Esophagus muscularis mucosa (tissue), 4 donors: ENCODE measurements at regions of chr16 and their contacts with region 1.

Region 1: DNA sequence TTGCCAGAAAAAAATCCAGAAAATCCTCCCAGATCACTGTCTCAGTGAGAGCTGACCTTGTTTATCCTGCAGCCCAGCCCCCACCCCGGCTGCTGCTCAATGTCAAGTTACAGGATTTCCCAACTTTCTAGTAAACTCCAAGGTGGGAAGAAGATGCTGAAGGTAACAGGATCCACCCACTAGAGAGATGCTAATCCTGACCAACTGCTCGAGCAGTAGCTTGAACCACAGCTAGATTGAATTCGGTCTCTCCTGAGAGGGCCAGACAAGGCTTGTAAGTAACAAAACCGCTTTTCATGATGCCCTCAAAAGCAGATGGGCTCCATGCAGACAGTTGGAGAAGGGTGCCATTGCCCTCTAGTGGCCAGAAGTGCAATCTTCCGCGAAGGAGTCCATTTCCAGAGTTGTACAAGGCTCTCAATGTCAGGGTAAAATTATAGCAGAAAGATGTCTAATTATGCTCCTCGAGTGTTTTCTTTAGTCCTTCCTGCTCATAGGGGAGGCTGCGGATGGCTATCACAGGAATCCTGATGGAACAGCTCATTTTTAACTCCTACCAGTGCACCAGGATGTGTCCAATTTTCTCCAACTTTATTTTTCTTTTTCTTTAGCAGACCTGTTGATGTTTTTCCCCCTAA is 3.9 kb downstream of the CDH11 start:
- DNase-seq: peak; percentile 91
- H3K4me3 ChIP-seq: peak overlapping the region in 1 of 4 donors; percentile 3
- H3K27ac ChIP-seq: peak overlapping the region in 2 of 4 donors; percentile 16 to 45
- H3K4me1 ChIP-seq: peaks cover 24 to 71% (median 69%) of the 10 kb centered on the region in 4 donors
- H3K27me3 ChIP-seq: peaks cover 0 to 7% (median 0%) of the 10 kb centered on the region in 4 donors
- CTCF ChIP-seq: peak; percentile 77 to 91 (median 87)
- EP300 ChIP-seq: no peak
- POLR2A ChIP-seq: no peak

Region 2: DNA sequence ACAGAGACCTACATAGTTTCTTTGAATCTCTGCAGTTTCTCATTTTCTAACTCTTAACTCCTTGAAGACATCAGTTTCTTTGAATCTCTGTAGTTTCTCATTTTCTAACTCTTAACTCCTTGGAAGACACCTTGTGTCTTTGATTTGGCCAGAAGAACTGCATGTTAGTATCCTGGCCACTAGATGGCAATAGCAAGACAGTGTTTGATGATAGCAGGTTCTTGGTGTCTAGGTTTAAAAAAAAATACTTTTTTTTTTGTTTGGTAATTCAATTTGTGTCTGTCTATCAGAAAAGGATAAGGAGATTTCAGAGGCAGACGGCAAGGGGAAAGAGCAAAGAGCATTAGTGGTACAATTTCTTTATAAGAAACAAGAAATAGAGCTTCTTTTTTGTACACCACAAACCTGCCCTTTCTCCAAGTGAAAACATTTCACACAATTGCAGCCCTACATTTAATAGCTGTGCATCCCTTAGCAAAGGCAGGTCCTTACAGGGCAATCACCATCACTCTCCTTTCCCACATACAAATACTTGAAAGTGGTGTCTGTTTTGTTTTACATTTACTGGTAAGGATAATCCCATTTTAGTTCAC is 1756.8 kb before region 1 on chr16:
- intact Hi-C with region 1: loop called (anchors 5 kb)
- DNase-seq: no peak
- H3K4me3 ChIP-seq: no peak overlapping the region
- H3K27ac ChIP-seq: no peak overlapping the region
- H3K4me1 ChIP-seq: no peaks in the 10 kb centered on the region
- H3K27me3 ChIP-seq: no peaks in the 10 kb centered on the region
- CTCF ChIP-seq: peak; percentile 49 to 78 (median 66)
- EP300 ChIP-seq: no peak
- POLR2A ChIP-seq: no peak

Region 3: GRCh38 chr16:65068151-65068740 is 49.7 kb before region 1 on chr16:
- intact Hi-C with region 1: loop called (anchors 10 kb)
- DNase-seq: peak; percentile 14
- H3K4me3 ChIP-seq: no peak overlapping the region
- H3K27ac ChIP-seq: peak overlapping the region in 1 of 4 donors; percentile 32
- H3K4me1 ChIP-seq: peaks cover 18 to 51% (median 47%) of the 10 kb centered on the region in 4 donors
- H3K27me3 ChIP-seq: no peaks in the 10 kb centered on the region
- CTCF ChIP-seq: no peak
- EP300 ChIP-seq: no peak
- POLR2A ChIP-seq: no peak